ENCODE measurements at regions of chr3 and their contacts with region 1.

Region 1: DNA sequence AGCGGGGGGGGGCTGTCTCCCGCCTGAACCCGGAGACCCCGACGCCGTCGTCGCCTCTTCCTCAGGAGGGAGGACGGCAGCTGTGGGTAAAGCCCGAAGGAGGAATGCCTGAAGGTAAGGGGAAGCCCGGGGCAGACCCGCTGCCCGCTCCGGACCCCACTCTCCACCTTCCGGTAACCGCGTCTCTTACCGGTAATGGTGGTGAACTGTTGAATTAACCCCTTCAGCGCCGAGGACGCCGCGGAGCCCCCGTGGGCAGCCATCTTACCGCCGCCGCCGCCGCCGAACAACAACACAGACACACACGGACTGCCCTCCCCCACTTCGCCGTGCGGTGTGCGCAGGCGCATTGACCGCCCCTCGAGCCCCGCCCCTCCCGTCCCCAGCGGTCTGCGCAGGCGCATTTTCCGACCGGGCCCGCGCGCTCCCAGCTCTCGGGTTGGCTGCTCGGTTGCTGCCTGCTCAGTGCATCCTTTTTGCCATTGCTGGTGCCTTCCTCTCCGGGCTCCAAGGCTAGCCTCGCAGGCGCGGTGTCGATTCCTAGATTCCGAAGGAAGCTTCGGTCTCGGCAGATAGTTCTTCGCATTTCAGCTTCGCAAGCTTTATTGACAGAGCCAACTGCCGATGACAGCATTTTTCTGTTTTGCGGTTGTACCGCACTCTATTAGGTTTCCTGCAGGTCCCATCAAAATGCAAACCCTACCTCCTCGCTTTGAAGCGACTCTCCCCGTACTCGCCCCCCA is at the start of gene UBXN7:
- DNase-seq: peak; percentile 58
- H3K4me3 ChIP-seq: peak within 1 kb of the TSS; percentile 79 to 97 (median 87)
- H3K27ac ChIP-seq: peak within 1 kb of the TSS; percentile 89 to 97 (median 94)
- H3K4me1 ChIP-seq: peaks cover 9 to 37% (median 10%) of the 10 kb centered on the region in 3 donors
- H3K27me3 ChIP-seq: no peaks in the 10 kb centered on the region
- CTCF ChIP-seq: peak in 1 of 6 experiments; percentile 14
- POLR2A ChIP-seq: peak in 3 of 4 donors; percentile 55 to 85 (median 59)
- total RNA-seq, gene UBXN7: 10.7 to 18.7 (median 14.1) TPM

Region 2: GRCh38 chr3:196268270-196269163 is 163.8 kb before region 1 on chr3:
- intact Hi-C with region 1: no loop called
- DNase-seq: no peak
- H3K4me3 ChIP-seq: no peak overlapping the region
- H3K27ac ChIP-seq: peak overlapping the region; percentile 23 to 64 (median 50)
- H3K4me1 ChIP-seq: peaks cover 0 to 14% (median 8%) of the 10 kb centered on the region in 3 donors
- H3K27me3 ChIP-seq: no peaks in the 10 kb centered on the region
- CTCF ChIP-seq: no peak
- POLR2A ChIP-seq: no peak

Region 3: GRCh38 chr3:196502775-196503195 is 70.5 kb after region 1 on chr3:
- intact Hi-C with region 1: loop called (anchors 5 kb)
- DNase-seq: no peak
- H3K4me3 ChIP-seq: peak overlapping the region; percentile 79 to 97 (median 86)
- H3K27ac ChIP-seq: peak overlapping the region; percentile 94 to 98 (median 98)
- H3K4me1 ChIP-seq: peaks cover 12 to 56% (median 19%) of the 10 kb centered on the region in 3 donors
- H3K27me3 ChIP-seq: no peaks in the 10 kb centered on the region
- CTCF ChIP-seq: peak in 1 of 6 experiments; percentile 7
- POLR2A ChIP-seq: no peak

Measured in esophagus squamous epithelium (tissue), 5 donors.